SK-N-SH (cell line): ENCODE measurements at regions of chr10 and their contacts with region 1.

Region 1: GRCh38 chr10:29119374-29119773 is 169.5 kb upstream of the LYZL1 start:
- DNase-seq: no peak
- H3K4me3 ChIP-seq: no peak overlapping the region
- H3K27ac ChIP-seq: no peak overlapping the region
- H3K4me1 ChIP-seq: peaks cover 4 to 6% of the 10 kb centered on the region in 2 experiments; a peak in 3 of 4 replicates
- H3K27me3 ChIP-seq: no peaks in the 10 kb centered on the region
- CTCF ChIP-seq: peak; percentile 28; the same call in 1 of the 2 replicates
- EP300 ChIP-seq: no peak
- RAD21 ChIP-seq: no peak

Region 2: GRCh38 chr10:29131952-29132820 is 12.8 kb after region 1 on chr10:
- CTCF ChIA-PET with region 1: interaction called, 15 read pairs
- POLR2A ChIA-PET with region 1: interaction called, 3 read pairs
- DNase-seq: no peak
- H3K4me3 ChIP-seq: no peak overlapping the region
- H3K27ac ChIP-seq: no peak overlapping the region
- H3K4me1 ChIP-seq: peaks cover 7 to 10% of the 10 kb centered on the region in 2 experiments; a peak in 3 of 4 replicates
- H3K27me3 ChIP-seq: no peaks in the 10 kb centered on the region; the same call in 1 of the 2 replicates
- CTCF ChIP-seq: no peak
- EP300 ChIP-seq: no peak
- RAD21 ChIP-seq: no peak